ENCODE measurements at regions of chr6 and their contacts with region 1.

Region 1: DNA sequence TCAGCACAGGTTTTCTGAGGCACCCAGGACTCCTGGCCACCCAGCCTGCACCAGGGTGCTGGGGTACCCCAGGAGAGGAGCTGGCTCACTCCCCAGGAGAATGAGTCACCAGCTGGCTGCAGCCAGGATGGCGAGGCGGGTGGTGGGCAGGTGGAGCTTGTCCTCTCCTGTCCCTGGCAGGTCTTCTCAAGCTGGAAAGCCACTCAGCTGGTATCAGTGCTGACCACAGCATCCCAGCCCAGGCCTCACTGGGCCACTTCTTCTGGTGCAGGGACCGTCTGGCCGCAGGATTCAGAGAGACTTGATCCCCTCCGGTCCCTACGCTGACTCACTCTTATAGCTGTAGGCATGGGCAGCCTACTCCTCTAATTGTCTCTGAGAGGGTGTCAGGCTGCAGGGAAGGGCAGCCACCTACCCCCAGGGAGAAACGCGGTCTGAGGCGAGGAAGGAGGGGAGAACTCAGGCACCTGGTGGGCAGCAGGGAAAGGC is 22.2 kb downstream of the TFEB start:
- DNase-seq: peak; percentile 65 to 77
- ATAC-seq: peak; percentile 83 to 84
- H3K4me3 ChIP-seq: no peak overlapping the region; the same call in 2 of the 3 replicates
- H3K27ac ChIP-seq: peak overlapping the region; percentile 98 to 99
- H3K4me1 ChIP-seq: peaks cover 66% of the 10 kb centered on the region
- CTCF ChIP-seq: no peak
- EP300 ChIP-seq: no peak
- POLR2A ChIP-seq: peak; percentile 31
- RAD21 ChIP-seq: 0 out of 5 replicates have a peak, but pooled peaks of 1 of the 2 experiments have one; percentile 10

Region 2: DNA sequence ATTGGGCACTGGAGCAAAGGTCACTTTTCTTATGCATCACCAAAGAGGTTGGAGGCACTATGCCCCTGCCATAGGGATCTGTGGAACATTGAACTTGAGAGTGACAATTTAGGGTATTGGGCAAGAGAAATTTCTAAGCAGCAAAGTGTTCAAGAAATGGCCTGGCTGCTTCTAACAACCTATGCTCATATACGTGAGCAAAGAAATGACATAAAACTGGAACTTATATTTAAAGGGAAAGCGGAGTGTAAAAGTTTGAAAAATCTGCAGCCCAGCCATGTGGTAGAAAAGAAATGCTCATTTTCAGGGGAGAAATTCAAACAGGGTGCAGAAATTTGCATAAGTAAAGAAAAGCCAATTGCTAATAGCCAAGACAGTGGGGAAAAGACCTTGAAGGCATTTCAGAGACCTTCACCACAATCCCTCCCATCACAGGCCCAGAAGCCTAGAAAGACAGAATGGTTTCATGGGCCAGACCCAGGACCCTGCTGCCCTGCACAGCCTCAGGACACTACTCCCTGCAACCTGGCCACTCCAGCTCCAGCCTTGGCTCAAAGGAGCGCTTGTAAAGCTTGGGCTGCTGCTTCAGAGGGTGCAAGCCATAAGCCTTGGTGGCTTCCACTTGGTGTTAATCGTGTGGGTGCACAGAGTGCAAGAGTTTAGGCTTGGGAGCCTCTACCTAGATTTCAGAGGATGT is 353.4 kb before region 1 on chr6:
- CTCF ChIA-PET with region 1: no interaction called
- POLR2A ChIA-PET with region 1: no interaction called
- DNase-seq: no peak
- ATAC-seq: no peak
- H3K4me3 ChIP-seq: no peak overlapping the region
- H3K27ac ChIP-seq: no peak overlapping the region
- H3K4me1 ChIP-seq: no peaks in the 10 kb centered on the region
- CTCF ChIP-seq: no peak
- EP300 ChIP-seq: no peak
- POLR2A ChIP-seq: no peak
- RAD21 ChIP-seq: no peak

Region 3: GRCh38 chr6:41578217-41579087 is 134.8 kb before region 1 on chr6:
- CTCF ChIA-PET with region 1: no interaction called
- POLR2A ChIA-PET with region 1: no interaction called
- DNase-seq: peak; percentile 54 to 74
- ATAC-seq: peak; percentile 62 to 69
- H3K4me3 ChIP-seq: peak overlapping the region; percentile 7
- H3K27ac ChIP-seq: peak overlapping the region; percentile 89 to 92
- H3K4me1 ChIP-seq: peaks cover 81% of the 10 kb centered on the region
- CTCF ChIP-seq: no peak
- EP300 ChIP-seq: peak; percentile 51 to 74; a peak in 3 of 5 replicates
- POLR2A ChIP-seq: no peak
- RAD21 ChIP-seq: peak in 1 of 2 experiments; percentile 35; a peak in 2 of 5 replicates

Region 4: GRCh38 chr6:41723530-41724227 is 10.5 kb after region 1 on chr6:
- CTCF ChIA-PET with region 1: interaction called, 6 read pairs
- POLR2A ChIA-PET with region 1: interaction called, 13 read pairs
- DNase-seq: peak; percentile 63 to 83
- ATAC-seq: peak; percentile 97
- H3K4me3 ChIP-seq: peak overlapping the region; percentile 20; the same call in 1 of the 3 replicates
- H3K27ac ChIP-seq: peak overlapping the region; percentile 76 to 89
- H3K4me1 ChIP-seq: peaks cover 29% of the 10 kb centered on the region
- CTCF ChIP-seq: no peak
- EP300 ChIP-seq: no peak
- POLR2A ChIP-seq: peak; percentile 11; the same call in 1 of the 2 replicates
- RAD21 ChIP-seq: no peak

Measured in A549 (cell line).